Cardiac septum (tissue), 1 donor: ENCODE measurements at regions of chrX and their contacts with region 1.

Region 1: DNA sequence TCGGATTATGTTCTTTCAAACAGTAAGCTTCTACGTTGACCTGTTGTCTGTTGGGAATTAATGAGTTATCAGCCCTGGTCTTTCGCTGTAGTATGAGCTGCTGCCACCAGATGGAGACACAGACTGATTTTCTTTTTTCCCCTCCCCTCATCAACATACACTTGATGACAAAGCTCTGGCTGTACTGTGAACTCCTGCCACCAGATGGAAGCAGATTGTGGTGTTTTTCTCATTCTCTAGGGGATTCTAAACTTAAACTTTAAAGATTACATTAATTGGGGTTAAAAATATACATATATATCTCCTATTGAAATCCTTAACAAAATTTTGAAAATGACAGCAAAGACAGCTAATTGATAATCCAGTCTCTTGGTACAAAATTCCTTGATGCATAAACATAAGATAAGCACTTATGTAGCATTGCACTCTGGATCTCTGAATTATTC is 44.8 kb downstream of the SMS start:
- DNase-seq: no peak

Region 2: DNA sequence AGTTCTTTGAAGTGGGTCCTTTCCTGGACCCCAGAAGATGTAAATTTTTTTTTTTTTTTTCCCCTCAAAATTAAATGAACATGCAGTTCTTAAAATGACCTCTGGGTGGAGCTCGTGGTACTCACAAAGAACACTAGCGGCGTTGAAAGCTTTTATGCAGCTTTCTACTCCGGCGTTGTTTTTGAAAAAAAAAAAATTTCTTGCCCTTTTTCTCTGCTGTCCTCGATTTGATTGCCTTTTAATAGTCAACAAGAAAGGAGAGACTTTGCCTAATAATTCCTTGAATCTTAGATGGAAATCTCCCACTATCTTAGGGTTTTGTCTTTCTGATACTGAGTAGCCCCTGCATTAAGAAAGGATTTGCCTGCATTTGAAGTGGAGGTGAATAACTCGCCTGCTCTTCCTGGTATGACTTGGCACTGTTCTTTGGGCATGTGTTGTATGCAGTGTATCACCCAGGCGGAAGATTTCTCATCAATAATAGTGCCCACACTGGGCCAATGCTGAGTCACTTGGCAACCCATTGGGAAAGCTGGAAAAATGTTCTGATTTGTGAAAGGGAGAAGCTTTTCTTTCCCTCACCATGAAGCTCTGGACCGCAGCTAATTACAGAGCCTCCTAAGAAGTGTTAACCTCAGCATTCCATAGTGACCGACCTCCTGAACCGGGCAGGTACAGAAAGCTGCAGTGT is 150.8 kb after region 1 on chrX:
- intact Hi-C with region 1: loop called (anchors 10 kb)
- DNase-seq: no peak

Region 3: DNA sequence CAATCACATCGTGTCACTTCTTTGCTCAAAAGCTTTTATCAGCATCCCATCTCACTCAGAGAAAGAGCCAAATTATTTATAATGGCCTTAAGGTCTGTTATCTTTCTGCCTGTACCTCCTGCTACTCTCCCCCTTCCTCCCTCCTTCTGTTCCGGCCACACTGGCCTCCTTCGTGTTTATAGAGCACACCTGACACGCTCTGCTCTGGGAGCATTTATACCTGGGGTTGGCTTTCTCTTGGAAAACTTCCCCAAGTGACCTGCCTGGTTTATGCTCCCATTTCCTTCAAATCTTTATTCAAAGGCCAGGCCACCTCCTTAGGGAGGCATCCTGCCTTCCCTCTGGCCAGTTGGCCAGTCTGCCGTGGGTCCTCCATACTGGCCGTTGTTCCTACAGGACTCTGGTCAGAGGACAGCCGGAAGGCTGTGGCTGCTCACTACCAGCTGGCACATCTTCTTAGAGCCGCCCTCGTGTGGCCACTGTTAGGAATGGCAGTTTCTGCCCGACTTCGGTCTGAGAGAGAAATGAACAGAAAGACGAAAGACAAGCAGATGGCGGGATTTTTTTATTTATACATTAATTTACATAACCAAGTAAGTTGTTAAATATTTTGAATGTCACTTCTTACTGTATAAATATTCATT is 207.2 kb after region 1 on chrX:
- intact Hi-C with region 1: loop called (anchors 10 kb)
- DNase-seq: peak; percentile 81

Region 4: GRCh38 chrX:23554304-23554703 is 1568.9 kb after region 1 on chrX:
- intact Hi-C with region 1: loop called (anchors 10 kb)
- DNase-seq: no peak

Region 5: DNA sequence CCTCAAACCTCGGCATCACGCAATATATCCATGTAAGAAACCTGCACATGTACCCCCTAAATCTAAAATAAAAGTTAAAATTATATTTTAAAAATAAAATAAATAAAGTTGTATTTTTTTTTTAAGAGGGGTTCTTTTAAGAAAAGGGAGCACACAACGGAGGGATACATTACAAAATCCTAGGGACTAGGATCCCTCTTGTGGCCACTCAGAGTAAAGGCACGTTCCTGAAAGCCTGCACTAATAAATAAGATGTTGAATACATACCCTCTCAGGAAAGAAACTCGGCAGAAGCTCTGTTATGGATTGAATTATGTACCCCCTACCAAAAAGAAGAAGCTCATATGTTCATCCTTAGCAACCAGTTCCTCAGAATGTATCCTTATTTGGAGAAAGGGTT is 1631.0 kb after region 1 on chrX:
- intact Hi-C with region 1: loop called (anchors 5 kb)
- DNase-seq: no peak